ENCODE measurements at regions of chr16 and their contacts with region 1.

Region 1: DNA sequence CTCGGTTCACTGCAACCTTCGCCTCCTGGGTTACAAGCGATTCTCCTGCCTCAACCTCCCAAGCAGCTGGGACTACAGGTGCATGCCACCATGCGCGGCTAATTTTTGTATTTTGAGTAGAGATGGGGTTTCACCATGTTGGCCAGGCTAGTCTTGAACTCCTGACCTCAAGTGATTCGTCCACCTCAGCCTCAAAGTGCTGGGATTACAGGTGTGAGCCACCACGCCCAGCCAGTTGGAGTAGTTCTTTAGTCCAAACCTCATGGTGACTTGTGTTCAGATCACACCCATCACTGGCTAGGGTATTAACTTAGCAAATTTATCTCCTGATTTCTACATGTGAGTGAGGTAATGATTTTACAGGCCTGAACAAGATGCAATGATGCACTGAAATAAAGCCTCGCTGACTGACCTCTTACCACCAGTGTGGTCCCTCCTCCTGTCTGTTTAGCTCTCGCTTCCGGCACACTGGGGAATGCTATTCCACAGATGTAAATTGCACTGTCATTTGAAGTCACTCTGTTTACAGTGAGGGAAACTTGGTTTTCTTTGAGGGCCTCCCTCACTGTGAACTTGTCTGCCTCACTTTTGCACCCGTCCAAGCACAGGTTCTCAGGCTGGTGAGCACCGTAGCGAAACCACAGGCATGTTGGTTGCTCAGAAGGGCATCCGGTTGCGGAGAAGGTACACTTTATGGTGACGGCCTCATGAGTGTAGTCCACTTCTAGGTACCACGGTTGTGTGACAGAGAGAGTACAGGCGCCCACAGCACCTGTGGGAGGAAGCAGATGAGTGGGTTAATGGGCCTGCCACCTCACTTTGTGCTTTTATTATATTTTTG is 5.5 kb downstream of the IGSF6 start:
- DNase-seq: peak in 9 of 10 donors; percentile 47 to 78 (median 69)
- ATAC-seq: peak; percentile 81 to 89
- H3K4me3 Mint-ChIP-seq: peak overlapping the region; percentile 68 to 89 (median 84)
- H3K27ac Mint-ChIP-seq: peak overlapping the region; percentile 93 to 98 (median 96)
- H3K4me1 Mint-ChIP-seq: peaks cover 12 to 81% (median 52%) of the 10 kb centered on the region in 4 donors
- H3K27me3 Mint-ChIP-seq: no peaks in the 10 kb centered on the region

Region 2: DNA sequence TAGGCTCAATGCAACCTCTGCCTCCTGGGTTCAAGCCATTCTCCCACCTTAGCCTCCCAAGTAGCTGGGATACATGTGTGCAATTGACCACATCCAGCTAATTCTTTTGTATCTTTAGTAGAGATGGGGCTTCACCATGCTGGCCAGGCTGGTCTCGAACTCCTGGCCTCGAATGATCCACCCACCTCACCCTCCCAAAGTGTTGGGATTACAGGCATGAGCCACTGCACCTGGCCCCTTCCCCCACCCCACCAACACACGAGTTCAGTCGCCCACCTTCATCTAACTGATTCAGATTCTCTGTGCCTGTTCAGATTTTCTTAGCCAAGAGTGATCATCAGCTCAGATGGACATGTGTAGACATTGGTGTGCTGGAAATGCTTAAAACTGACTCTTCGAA is 72.6 kb before region 1 on chr16:
- POLR2A ChIA-PET with region 1: no interaction called
- DNase-seq: no peak
- ATAC-seq: no peak
- H3K4me3 Mint-ChIP-seq: no peak overlapping the region
- H3K27ac Mint-ChIP-seq: no peak overlapping the region
- H3K4me1 Mint-ChIP-seq: no peaks in the 10 kb centered on the region
- H3K27me3 Mint-ChIP-seq: peaks cover 0 to 9% (median 7%) of the 10 kb centered on the region in 5 donors

Region 3: DNA sequence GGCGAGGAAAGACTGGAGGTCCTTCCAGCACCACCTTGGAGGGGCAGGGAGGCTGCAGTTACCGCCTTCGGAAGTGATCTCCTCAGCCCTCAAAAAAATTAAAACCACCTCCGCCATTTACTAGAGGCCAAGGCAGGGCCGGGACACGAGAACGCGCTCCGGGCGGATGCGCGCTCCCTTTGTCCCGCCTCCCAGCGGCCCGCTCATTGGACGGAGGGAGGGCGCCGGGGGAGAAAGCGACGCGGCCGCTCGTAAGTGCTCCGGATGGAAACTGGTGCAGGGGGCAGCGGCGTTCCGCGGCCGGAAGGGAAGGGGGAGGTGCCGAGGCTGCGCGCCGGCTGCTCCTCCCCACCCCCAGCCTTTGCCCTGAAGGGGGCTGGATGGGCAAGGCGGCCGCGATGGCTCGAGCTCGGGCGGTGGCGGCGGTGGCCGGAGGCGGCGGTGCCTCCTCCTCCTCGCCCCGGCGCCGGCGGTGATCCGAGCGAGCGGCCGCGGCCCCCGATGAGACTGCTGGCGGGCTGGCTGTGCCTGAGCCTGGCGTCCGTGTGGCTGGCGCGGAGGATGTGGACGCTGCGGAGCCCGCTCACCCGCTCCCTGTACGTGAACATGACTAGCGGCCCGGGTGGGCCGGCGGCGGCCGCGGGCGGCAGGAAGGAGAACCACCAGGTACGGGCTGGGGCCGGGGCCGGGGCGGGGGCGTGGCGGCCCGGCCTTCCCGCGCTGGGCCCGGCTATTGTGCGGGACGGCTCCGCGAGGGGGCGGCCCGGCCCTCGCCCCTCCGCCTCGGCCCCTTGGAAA is 47.5 kb before region 1 on chr16 and contains the start of gene METTL9:
- POLR2A ChIA-PET with region 1: interaction called, 40 read pairs
- DNase-seq: peak; percentile 90 to 97 (median 94)
- ATAC-seq: peak; percentile 89 to 90
- H3K4me3 Mint-ChIP-seq: peak within 1 kb of the TSS; percentile 87 to 96 (median 93)
- H3K27ac Mint-ChIP-seq: peak within 1 kb of the TSS; percentile 92 to 99 (median 96)
- H3K4me1 Mint-ChIP-seq: peaks cover 28 to 67% (median 64%) of the 10 kb centered on the region in 4 donors
- H3K27me3 Mint-ChIP-seq: no peaks in the 10 kb centered on the region
- polyA plus RNA-seq, gene METTL9: 100 to 156 (median 117) TPM

Region 4: GRCh38 chr16:21611546-21612384 is 35.2 kb before region 1 on chr16:
- POLR2A ChIA-PET with region 1: no interaction called
- DNase-seq: no peak
- ATAC-seq: peak in 1 of 2 donors; percentile 27
- H3K4me3 Mint-ChIP-seq: peak overlapping the region in 8 of 10 donors; percentile 5 to 70 (median 28)
- H3K27ac Mint-ChIP-seq: peak overlapping the region in 9 of 10 donors; percentile 3 to 78 (median 40)
- H3K4me1 Mint-ChIP-seq: peaks cover 42 to 90% (median 82%) of the 10 kb centered on the region in 4 donors
- H3K27me3 Mint-ChIP-seq: no peaks in the 10 kb centered on the region

Measured in naive thymus-derived CD8-positive, alpha-beta T cell (primary cell).